Activated naive CD4-positive, alpha-beta T cell treated with anti-CD3 and anti-CD28 coated beads, Interleukin-2, amount 10 ng/mL, durations not matched to agents 7 days and 5 days (primary cell): ENCODE measurements at regions of chr1 and their contacts with region 1.

Region 1: GRCh38 chr1:247390116-247390791 is 25.7 kb upstream of the NLRP3 start:
- DNase-seq: peak; percentile 89
- H3K4me3 Mint-ChIP-seq: peak overlapping the region; percentile 62
- H3K27ac Mint-ChIP-seq: peak overlapping the region; percentile 84
- H3K4me1 Mint-ChIP-seq: peaks cover 16% of the 10 kb centered on the region
- H3K27me3 Mint-ChIP-seq: peaks cover 42% of the 10 kb centered on the region

Region 2: GRCh38 chr1:247373721-247374141 is 16.5 kb before region 1 on chr1:
- CTCF ChIA-PET with region 1: interaction called, 25 read pairs
- DNase-seq: peak; percentile 76
- H3K4me3 Mint-ChIP-seq: no peak overlapping the region
- H3K27ac Mint-ChIP-seq: no peak overlapping the region
- H3K4me1 Mint-ChIP-seq: peaks cover 7% of the 10 kb centered on the region
- H3K27me3 Mint-ChIP-seq: peaks cover 9% of the 10 kb centered on the region

Region 3: DNA sequence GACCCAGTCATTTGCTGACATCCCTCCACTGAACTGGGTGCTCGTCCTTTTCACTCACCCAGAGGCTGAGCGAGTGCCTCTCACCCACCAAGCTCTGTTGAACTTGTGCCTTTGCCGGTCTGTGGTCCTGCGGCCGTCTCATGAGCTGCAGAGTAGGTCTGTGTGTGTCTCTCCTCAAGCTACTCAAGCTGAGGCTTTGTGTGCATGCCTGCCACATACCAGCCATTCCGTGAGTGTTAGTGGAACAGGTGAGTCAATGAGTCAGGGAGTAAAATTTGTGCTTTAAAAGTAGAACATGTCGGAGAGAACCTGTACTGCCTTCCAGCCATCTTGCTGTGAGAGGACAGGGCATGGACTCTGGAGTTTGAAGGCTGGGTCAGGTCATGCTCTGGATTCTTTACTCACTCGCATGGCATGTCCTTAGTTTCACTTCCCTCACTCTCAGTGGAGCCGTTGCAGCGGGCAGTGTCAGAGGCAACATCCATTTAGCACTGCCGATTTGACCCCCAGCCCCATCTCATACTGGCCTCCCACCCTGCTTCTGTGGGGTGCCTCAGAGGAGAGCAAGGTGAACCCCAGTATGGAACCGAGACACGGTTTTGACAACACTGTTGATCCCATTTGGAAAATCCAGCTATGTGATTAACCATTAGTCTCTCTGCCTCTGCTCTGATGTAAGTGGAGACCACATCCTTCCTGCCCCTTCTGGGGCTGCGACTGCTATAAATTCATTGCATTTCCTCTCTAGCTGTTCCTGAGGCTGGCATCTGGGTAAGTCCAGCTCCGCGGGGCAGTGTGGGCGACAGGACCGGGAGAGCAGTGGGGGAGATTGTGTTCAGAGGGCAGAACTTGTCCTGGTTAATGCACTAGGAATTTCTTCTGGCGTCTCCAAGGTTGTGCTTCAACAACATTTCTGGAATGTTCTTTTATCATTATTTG is 25.4 kb after region 1 on chr1 and contains the start of gene NLRP3:
- CTCF ChIA-PET with region 1: interaction called, 12 read pairs
- DNase-seq: peak; percentile 61
- H3K4me3 Mint-ChIP-seq: peak within 1 kb of the TSS; percentile 82
- H3K27ac Mint-ChIP-seq: peak within 1 kb of the TSS; percentile 82
- H3K4me1 Mint-ChIP-seq: peaks cover 68% of the 10 kb centered on the region
- H3K27me3 Mint-ChIP-seq: peaks cover 21% of the 10 kb centered on the region

Region 4: GRCh38 chr1:247487057-247487456 is 96.8 kb after region 1 on chr1:
- CTCF ChIA-PET with region 1: interaction called, 25 read pairs
- DNase-seq: peak; percentile 47
- H3K4me3 Mint-ChIP-seq: no peak overlapping the region
- H3K27ac Mint-ChIP-seq: peak overlapping the region; percentile 1
- H3K4me1 Mint-ChIP-seq: no peaks in the 10 kb centered on the region
- H3K27me3 Mint-ChIP-seq: peaks cover 15% of the 10 kb centered on the region